WTC11 (cell line): ENCODE measurements at regions of chr17 and their contacts with region 1.

Region 1: GRCh38 chr17:2929881-2930533 is 133.4 kb downstream of the OR1D5 start:
- DNase-seq: peak; percentile 89
- ATAC-seq: peak; percentile 90
- H3K4me3 Mint-ChIP-seq: no peak overlapping the region
- H3K27ac Mint-ChIP-seq: 0 out of 2 replicates have a peak overlapping the region, but pooled peaks have one; percentile 58
- H3K4me1 Mint-ChIP-seq: peaks cover 41% of the 10 kb centered on the region
- H3K27me3 Mint-ChIP-seq: no peaks in the 10 kb centered on the region
- CTCF ChIP-seq: peak; percentile 84

Region 2: GRCh38 chr17:2796164-2797125 is 133.6 kb before region 1 on chr17 and contains the start of gene RAP1GAP2:
- CTCF ChIA-PET with region 1: no interaction called
- POLR2A ChIA-PET with region 1: no interaction called
- DNase-seq: no peak
- ATAC-seq: no peak
- H3K4me3 Mint-ChIP-seq: no peak within 1 kb of the TSS
- H3K27ac Mint-ChIP-seq: peak within 1 kb of the TSS; percentile 60; the same call in 1 of the 2 replicates
- H3K4me1 Mint-ChIP-seq: peaks cover 17% of the 10 kb centered on the region
- H3K27me3 Mint-ChIP-seq: no peaks in the 10 kb centered on the region
- CTCF ChIP-seq: no peak
- total RNA-seq, gene RAP1GAP2: 64.5 to 72.8 TPM (median 65.4 TPM) in 3 replicates

Region 3: DNA sequence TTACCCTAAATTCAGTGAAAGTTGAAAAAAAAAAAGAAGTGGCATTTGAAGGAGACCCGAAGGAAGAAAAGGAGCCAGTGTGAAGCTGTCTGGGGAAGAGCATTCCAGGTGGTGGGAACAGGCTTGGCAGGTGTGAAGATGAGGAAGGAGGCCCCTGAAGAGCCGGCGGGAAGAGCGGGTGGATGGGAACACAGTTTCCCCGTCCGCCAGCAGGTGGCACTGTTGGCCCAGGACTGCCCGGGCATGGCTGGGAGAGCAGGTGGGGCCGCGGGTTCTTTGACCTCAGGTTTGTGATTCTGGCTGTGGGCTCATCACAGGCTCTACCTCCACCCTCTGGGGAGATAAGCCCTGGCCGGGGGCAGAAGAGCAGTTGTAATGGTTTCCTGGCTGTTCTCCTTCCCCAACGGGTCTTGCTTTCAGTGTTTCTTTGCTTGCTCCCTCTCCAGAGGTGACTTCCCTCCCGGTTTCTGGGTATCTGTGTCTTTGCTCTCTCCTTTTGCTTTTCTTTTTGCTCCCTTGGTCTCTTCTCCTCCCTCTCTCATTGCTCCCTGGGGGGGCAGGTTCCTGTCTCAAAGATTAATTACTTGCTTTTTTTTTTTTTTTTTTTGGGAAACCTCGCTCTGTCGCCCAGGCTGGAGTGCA is 101.5 kb before region 1 on chr17:
- CTCF ChIA-PET with region 1: interaction called, 33 read pairs
- POLR2A ChIA-PET with region 1: no interaction called
- DNase-seq: peak; percentile 95
- ATAC-seq: peak; percentile 91
- H3K4me3 Mint-ChIP-seq: no peak overlapping the region
- H3K27ac Mint-ChIP-seq: no peak overlapping the region
- H3K4me1 Mint-ChIP-seq: peaks cover 11% of the 10 kb centered on the region
- H3K27me3 Mint-ChIP-seq: no peaks in the 10 kb centered on the region
- CTCF ChIP-seq: peak; percentile 94

Region 4: GRCh38 chr17:2862197-2862596 is 67.8 kb before region 1 on chr17:
- CTCF ChIA-PET with region 1: interaction called, 19 read pairs
- POLR2A ChIA-PET with region 1: no interaction called
- DNase-seq: no peak
- ATAC-seq: no peak
- H3K4me3 Mint-ChIP-seq: no peak overlapping the region
- H3K27ac Mint-ChIP-seq: no peak overlapping the region; the same call in 1 of the 2 replicates
- H3K4me1 Mint-ChIP-seq: peaks cover 66% of the 10 kb centered on the region
- H3K27me3 Mint-ChIP-seq: no peaks in the 10 kb centered on the region
- CTCF ChIP-seq: no peak

Region 5: DNA sequence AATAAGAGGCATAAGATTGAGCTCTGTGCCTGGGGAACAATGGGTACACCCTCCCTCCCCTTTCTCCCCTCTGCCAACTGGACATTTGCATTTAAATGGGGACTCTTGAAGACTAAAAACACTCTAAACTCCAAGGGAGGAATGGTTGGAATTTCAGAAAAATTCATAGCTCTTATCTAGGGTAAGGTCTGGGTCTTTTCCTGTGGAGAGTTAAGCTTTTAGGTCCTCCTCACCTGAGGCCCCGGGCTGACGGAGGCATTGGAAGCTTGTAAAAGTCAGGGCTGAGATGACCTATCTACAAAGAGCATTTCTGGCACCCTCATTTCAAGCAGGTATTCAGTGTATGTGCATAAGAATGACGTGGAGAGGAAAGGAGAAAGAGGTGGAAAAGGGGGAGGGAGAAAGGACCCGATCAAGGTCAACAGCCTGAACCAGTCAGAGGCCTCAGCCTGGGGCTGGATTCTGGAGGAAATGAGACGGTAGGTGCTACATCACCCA is 55.8 kb before region 1 on chr17:
- CTCF ChIA-PET with region 1: interaction called, 19 read pairs
- POLR2A ChIA-PET with region 1: no interaction called
- DNase-seq: peak; percentile 61
- ATAC-seq: peak; percentile 73
- H3K4me3 Mint-ChIP-seq: peak overlapping the region; percentile 59
- H3K27ac Mint-ChIP-seq: peak overlapping the region; percentile 100
- H3K4me1 Mint-ChIP-seq: peaks cover 85% of the 10 kb centered on the region
- H3K27me3 Mint-ChIP-seq: no peaks in the 10 kb centered on the region
- CTCF ChIP-seq: no peak

Region 6: DNA sequence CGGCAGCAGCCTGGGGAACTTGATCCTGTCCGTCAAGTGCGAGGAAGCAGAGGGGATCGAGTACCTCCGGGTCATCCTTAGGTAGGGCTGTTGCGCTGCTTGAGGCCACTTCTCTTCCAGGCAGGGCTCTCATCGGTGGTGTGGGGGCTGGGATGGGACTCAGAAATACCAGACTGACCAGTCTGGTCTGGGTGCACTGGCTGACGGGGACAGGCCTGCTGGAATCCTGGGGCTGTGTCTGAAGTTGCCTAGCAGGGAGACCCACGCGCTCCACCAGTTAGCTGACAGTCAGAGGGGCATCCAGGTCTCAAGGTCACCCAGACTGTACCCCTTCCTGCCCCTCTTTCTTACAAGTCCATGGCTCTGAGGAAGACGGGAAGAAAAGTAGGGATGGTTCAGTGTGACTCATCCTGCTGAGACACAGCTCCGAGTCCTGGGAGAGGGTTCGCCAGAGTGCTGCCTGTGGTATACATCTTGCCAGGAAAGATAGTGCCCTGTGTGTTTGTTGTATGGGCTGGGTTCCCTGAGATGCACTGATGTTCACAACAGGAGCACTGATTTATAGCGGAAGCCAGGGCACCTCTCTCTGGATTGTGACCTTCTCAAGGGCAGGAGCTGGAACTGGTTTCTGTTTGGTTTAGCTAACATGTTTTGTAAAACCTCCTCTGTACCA is 35.7 kb after region 1 on chr17:
- CTCF ChIA-PET with region 1: no interaction called
- POLR2A ChIA-PET with region 1: no interaction called
- DNase-seq: no peak
- ATAC-seq: no peak
- H3K4me3 Mint-ChIP-seq: no peak overlapping the region
- H3K27ac Mint-ChIP-seq: peak overlapping the region; percentile 77
- H3K4me1 Mint-ChIP-seq: peaks cover under 1% of the 10 kb centered on the region; the same call in 1 of the 2 replicates
- H3K27me3 Mint-ChIP-seq: no peaks in the 10 kb centered on the region
- CTCF ChIP-seq: no peak

Region 7: GRCh38 chr17:3012926-3013581 is 83.0 kb after region 1 on chr17:
- CTCF ChIA-PET with region 1: interaction called, 22 read pairs
- POLR2A ChIA-PET with region 1: no interaction called
- DNase-seq: peak; percentile 86
- ATAC-seq: peak; percentile 97
- H3K4me3 Mint-ChIP-seq: no peak overlapping the region
- H3K27ac Mint-ChIP-seq: no peak overlapping the region
- H3K4me1 Mint-ChIP-seq: no peaks in the 10 kb centered on the region
- H3K27me3 Mint-ChIP-seq: no peaks in the 10 kb centered on the region
- CTCF ChIP-seq: peak; percentile 77